ENCODE measurements at regions of chr17 and their contacts with region 1.

Region 1: DNA sequence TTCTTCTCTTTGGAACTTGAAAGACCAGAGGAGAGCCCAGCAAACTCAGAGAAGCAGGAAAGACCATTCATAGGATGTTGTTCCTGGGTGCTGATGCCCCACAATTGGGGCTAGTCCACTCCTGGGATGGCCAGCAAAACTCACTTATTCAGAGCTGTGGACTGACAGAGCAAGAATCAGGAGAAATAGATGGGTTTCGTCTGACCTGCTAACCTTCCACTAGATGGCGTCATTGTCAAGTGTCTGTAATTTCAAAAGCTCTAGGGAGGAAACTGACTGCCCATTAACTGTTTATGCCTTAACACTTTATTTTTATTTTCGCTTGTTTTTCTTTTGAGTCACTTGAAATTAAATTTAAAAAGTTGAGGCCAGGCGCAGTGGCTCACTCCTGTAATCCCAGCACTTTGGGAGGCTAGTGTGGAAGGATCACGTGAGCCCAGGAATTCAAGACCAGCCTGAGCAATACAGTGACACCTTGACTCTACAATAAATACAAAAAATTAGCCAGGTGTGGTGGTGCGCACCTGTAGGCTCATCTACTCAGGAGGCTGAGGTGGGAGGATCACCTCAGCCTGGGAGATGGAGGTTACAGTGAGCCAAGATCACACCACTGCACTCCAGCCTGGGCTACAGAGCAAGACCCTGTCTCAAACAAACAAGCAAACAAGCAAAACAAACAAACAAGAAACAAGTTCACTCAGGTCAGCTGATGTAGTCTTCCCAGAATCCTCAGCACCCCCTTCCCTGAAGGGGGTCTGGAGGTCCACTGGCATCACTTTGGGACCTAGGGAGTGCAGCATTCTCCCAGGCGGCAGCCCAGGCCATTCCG is 28.6 kb upstream of the MILR1 start:
- DNase-seq: peak; percentile 61
- CTCF ChIP-seq: peak; percentile 66

Region 2: DNA sequence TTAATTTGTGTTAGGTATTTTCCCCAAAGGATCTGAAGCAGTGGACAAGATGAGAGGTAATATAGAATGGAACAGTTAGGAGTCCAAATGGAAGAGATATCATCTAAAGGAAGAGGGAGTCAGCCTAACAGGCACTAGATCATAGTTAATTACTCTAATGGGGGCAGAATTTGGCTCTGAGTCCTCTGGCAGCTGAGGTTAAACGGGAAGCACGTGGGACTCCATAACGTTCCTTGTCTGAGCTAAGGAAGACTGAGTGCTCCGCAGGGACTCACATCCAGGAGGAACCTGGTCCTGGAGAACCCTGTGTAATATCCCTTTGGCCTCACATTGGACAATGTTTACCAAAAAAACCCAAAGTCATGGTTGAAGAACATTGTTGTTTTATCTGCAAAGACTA is 110.6 kb before region 1 on chr17:
- in situ Hi-C with region 1: loop called (anchors 5 kb)
- DNase-seq: no peak
- CTCF ChIP-seq: no peak

Region 3: DNA sequence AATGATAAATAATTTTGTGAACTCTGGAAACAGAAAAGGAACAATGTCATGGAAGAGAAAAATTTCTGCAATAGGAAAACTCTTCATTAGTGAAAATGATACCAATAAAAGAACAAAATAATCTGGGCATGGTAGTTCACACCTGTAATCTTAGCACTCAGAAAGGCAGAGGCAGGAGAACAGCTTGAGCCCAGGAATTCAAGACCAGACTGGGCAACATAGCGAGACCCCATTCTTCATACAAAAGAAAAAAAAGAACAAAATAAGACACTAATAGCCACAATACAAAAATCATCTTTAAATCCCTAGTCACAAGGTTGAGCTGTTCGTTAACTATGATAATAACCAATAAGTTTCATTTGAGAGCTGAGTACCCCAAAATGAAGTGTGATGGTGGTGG is 67.9 kb after region 1 on chr17:
- in situ Hi-C with region 1: loop called (anchors 5 kb)
- DNase-seq: no peak
- CTCF ChIP-seq: no peak

Region 4: DNA sequence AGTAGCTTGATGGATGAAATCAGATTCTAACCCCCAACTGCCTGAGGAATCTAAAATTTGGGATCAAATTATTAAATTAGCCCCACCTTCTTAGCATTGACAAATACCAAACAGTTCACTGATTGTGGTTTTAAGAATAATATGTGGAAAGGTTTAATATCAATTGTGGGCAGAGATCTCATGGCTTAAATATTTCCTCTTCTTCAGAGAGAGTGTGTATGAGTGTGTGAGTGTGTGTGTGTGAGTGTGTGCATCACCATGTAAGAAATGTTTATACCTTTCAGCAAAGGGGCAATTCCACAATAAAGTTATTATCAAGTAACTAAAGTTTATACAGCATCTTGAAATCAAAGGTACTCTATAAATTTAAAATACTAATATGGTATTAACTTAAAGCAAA is 238.6 kb after region 1 on chr17:
- in situ Hi-C with region 1: loop called (anchors 10 kb)
- DNase-seq: no peak
- CTCF ChIP-seq: no peak

Measured in GM13977 (cell line).